Activated T-helper 1 cell treated with anti-CD3 and anti-CD28 coated beads, Interleukin-12 subunit alpha, Interleukin-12 subunit beta, Interleukin-2, Interleukin-4 antibody, amounts not matched to agents 30 ng/mL and 10 ng/mL and 1 ng/mL, durations not matched to agents 14 hours and 24 hours and 36 hours (primary cell): ENCODE measurements at regions of chr3 and their contacts with region 1.

Region 1: DNA sequence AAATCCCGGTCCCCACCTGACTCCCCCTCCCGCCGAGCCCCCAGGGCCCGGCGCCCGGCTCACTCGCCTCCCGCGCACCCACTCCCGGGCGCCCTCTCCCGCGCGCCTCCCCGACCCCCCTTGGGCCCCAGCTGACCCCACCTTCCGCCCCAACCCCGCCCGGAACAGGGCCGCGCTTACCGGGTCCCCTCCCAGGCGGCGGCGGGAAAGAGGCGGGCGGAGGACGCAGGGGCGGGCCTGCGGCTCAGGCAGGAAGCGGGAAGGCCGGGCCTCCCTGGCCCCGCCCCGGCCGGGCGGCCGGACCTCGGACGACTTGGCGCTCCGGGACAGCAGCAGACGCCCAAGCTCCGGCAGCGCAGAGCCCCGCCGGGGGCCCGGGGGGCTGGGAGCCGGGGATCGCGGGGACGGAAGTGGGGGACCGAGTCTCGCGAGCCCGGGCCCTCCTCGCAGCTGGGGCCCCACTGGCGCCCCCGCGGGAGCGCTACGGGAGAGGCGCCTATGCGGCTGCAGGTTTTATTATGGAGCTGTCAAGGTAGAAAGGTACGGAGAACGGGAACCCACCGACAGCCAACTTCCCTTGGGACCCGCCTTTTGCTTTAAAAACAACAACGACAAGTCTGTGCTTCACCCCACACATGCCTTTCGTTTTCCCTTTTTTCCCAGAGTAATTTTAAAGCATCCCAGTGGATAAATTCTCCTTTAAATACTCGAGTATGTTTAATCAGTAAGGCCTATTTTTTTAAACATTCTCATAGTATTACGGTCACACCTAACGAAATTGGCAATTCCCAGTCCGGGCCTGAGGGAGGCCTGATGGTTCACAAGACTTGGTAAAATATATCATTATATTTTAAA is at the start of gene SLC41A3:
- DNase-seq: peak; percentile 90
- H3K4me3 Mint-ChIP-seq: peak within 1 kb of the TSS; percentile 93
- H3K27ac Mint-ChIP-seq: peak within 1 kb of the TSS; percentile 89
- H3K4me1 Mint-ChIP-seq: peaks cover 26% of the 10 kb centered on the region
- H3K27me3 Mint-ChIP-seq: no peaks in the 10 kb centered on the region
- total RNA-seq, gene SLC41A3: 17.3 and 23.4 TPM in 2 replicates

Region 2: GRCh38 chr3:125916376-125916978 is 167.7 kb before region 1 on chr3:
- intact Hi-C with region 1: loop called (anchors 1 kb)
- DNase-seq: peak; percentile 93
- H3K4me3 Mint-ChIP-seq: peak overlapping the region; percentile 86
- H3K27ac Mint-ChIP-seq: peak overlapping the region; percentile 83
- H3K4me1 Mint-ChIP-seq: peaks cover 24% of the 10 kb centered on the region
- H3K27me3 Mint-ChIP-seq: peaks cover 4% of the 10 kb centered on the region

Region 3: GRCh38 chr3:125990253-125990970 is 93.7 kb before region 1 on chr3:
- intact Hi-C with region 1: loop called (anchors 1 kb)
- DNase-seq: peak; percentile 68
- H3K4me3 Mint-ChIP-seq: peak overlapping the region; percentile 90
- H3K27ac Mint-ChIP-seq: peak overlapping the region; percentile 88
- H3K4me1 Mint-ChIP-seq: peaks cover 16% of the 10 kb centered on the region
- H3K27me3 Mint-ChIP-seq: peaks cover 15% of the 10 kb centered on the region

Region 4: GRCh38 chr3:126056681-126057546 is 27.2 kb before region 1 on chr3:
- intact Hi-C with region 1: no loop called
- DNase-seq: no peak
- H3K4me3 Mint-ChIP-seq: no peak overlapping the region
- H3K27ac Mint-ChIP-seq: no peak overlapping the region
- H3K4me1 Mint-ChIP-seq: peaks cover 12% of the 10 kb centered on the region
- H3K27me3 Mint-ChIP-seq: no peaks in the 10 kb centered on the region

Region 5: GRCh38 chr3:126194713-126195305 is 110.7 kb after region 1 on chr3:
- intact Hi-C with region 1: no loop called
- DNase-seq: no peak
- H3K4me3 Mint-ChIP-seq: no peak overlapping the region
- H3K27ac Mint-ChIP-seq: no peak overlapping the region
- H3K4me1 Mint-ChIP-seq: no peaks in the 10 kb centered on the region
- H3K27me3 Mint-ChIP-seq: peaks cover under 1% of the 10 kb centered on the region

Region 6: DNA sequence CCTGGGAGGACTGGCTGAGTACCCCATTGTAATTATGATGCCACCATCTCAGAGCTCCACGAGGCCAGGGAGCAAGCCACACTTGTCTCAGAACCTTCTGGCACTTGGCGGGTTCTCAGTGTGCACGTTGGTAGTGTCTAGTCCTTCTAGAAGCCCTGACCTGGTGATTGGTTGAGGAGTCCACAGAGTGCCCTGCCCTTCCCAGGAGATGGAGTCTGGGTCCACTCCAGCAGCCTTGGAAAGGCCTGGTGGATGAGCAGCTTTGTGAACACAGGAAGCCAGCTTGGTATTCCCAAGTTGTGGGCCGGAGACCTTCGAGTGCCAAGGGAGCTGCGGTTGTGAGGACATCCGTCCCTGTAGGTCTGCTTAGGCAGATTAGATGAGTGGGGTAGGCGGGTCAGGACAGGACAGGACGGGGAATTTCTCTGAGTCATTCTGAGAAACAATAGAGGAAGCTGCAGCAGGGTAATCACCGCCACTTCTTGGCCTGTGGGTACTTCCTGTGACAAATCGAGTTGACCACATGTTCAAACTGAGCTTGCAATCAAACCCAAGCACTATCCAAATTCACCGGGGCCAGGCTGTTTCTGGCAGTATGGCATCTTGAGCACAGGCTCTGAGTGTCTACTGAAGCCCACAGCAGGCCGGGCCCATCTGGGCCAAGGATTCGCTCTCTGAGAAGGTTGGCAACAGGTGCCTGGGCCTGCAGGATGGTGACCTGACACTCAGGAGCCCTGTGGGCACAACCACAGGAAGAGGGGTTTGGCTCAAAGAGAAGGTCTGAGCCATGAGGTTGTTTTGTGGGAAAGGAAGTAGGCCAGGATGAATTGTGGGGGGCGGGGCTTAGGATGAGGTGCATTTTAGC is 827.3 kb after region 1 on chr3:
- intact Hi-C with region 1: loop called (anchors 10 kb)
- DNase-seq: peak; percentile 81
- H3K4me3 Mint-ChIP-seq: peak overlapping the region; percentile 67
- H3K27ac Mint-ChIP-seq: peak overlapping the region; percentile 73
- H3K4me1 Mint-ChIP-seq: peaks cover 62% of the 10 kb centered on the region
- H3K27me3 Mint-ChIP-seq: no peaks in the 10 kb centered on the region